Posterior vena cava (tissue), 2 donors: ENCODE measurements at regions of chr13 and their contacts with region 1.

Region 1: DNA sequence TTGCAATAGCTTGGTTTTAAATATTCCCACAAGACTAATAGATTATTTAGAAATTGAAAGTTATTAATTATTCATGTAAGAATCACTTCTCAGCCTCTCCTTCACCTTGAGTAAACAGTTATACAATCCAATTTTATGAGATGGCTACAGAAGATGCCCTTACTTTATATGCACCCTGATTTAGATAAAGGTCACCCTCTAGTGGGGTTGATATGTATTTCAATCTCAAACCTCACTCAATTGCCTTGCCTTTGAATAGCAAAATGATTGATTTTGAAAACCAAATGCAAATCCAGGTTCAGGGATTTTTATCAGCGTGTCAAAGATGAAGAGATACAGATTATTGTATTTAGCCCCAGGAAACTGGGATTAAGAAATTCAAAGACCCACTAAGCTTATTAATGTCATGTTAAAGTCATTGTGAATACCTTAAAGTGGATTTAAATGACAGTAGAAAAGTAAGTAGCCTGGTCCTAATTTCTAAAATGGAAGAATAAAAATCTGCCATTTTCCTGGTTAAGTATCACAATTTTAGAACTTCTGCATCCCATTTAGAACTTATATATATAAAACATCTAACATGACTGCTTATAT is 305.1 kb downstream of the ITGBL1 start:
- DNase-seq: no peak

Region 2: GRCh38 chr13:100454876-100455275 is 1302.7 kb before region 1 on chr13:
- intact Hi-C with region 1: no loop called
- DNase-seq: no peak

Region 3: DNA sequence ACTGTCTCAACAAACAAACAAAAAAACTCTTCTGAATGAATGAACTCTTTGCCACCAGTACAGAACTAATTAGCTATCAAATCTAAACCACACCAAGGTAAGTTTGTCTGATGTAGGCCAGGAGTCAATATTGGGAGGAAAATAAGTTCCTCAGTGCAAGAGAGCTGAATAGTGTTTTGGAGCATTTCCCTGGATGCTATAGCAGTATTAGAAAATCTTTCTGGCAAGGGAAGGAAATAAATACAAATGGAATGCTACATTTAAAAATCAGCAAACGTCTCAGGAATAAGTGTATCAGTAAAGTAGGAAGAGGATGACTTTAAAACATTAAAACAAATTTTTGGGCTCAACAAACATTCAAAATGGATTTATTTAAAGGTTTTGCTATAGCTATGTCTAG is 1001.7 kb before region 1 on chr13:
- intact Hi-C with region 1: no loop called
- DNase-seq: no peak

Region 4: DNA sequence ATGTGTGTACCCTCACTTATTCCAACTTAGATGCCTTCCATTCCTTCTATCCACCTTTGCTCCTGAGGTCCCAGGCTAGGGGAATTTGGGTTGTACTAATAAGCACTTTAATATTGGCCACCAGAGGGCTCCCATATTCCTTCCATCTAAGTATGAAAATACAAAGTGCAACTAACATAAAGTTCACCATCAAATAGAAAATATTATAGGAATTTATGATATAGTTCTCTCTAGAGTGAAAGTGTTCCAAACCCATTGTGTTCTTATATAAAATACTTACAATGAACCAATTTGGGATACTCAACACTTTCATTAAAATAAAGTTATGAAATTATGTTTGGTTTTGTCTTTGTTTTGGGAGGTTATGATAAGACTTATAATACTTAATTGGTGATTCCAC is 242.8 kb before region 1 on chr13:
- intact Hi-C with region 1: loop called in 1 of 2 experiments (anchors 5 kb)
- DNase-seq: no peak